K562 (cell line): ENCODE measurements at regions of chr19 and their contacts with region 1.

Region 1: GRCh38 chr19:6862673-6863078 is 24.7 kb upstream of the ADGRE1 start:
- DNase-seq: peak; percentile 76 to 89 (median 78)
- ATAC-seq: peak; percentile 98
- H3K4me3 ChIP-seq: no peak overlapping the region
- H3K27ac ChIP-seq: no peak overlapping the region
- H3K4me1 ChIP-seq: peaks cover 0 to 17% of the 10 kb centered on the region in 2 experiments; a peak in 3 of 5 replicates
- H3K27me3 ChIP-seq: no peaks in the 10 kb centered on the region; a peak in 1 of 5 replicates
- CTCF ChIP-seq: peak; percentile 93 to 96 (median 96)
- EP300 ChIP-seq: peak; percentile 27; the same call in 1 of the 2 replicates
- POLR2A ChIP-seq: no peak
- RAD21 ChIP-seq: peak; percentile 88 to 95

Region 2: GRCh38 chr19:6048808-6049405 is 813.8 kb before region 1 on chr19:
- CTCF ChIA-PET with region 1: interaction called, 12 read pairs
- POLR2A ChIA-PET with region 1: no interaction called
- in situ Hi-C with region 1: no loop called
- intact Hi-C with region 1: loop called (anchors 10 kb)
- DNase-seq: peak; percentile 83 to 89 (median 85)
- ATAC-seq: peak; percentile 100
- H3K4me3 ChIP-seq: no peak overlapping the region
- H3K27ac ChIP-seq: no peak overlapping the region
- H3K4me1 ChIP-seq: peaks cover 4 to 9% of the 10 kb centered on the region in 2 experiments; a peak in 3 of 5 replicates
- H3K27me3 ChIP-seq: no peaks in the 10 kb centered on the region
- CTCF ChIP-seq: peak; percentile 76 to 93 (median 92)
- EP300 ChIP-seq: no peak
- POLR2A ChIP-seq: no peak
- RAD21 ChIP-seq: peak; percentile 84 to 96

Region 3: DNA sequence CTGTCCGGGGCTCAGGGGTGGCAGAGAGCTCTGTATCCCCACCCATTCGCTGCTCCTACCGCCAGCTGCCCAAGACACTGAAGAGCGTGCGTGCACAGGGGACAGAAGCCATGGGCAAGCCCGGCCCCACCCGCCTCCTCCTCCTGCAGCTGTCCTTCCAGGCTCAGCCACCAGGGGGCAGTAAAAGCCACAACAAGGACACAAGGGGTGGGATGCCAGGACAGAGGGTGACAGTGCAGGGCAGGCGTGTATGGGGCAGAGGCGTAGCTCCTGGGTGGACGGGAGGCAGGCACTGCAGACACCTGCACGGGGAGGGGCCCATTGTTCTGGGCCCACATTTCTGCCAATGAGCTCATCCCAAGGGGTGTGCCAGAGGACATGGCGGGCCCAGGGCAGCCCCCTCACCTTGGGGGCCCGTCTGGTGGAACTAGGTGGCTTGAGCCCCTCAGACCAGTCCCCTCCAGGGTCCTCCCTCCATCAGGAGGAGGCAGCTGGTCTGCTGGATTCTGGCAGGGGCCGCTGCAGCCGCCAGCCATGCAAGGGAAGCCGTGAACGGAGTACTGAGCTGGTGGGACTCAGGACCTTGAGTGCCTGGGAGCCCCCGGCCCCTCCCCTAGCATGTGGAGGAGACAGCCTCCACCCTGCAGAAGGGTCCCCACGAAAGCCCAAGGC is 644.0 kb before region 1 on chr19:
- CTCF ChIA-PET with region 1: interaction called, 16 read pairs
- POLR2A ChIA-PET with region 1: no interaction called
- in situ Hi-C with region 1: no loop called
- intact Hi-C with region 1: no loop called
- DNase-seq: peak; percentile 87 to 92 (median 90)
- ATAC-seq: peak; percentile 92
- H3K4me3 ChIP-seq: no peak overlapping the region
- H3K27ac ChIP-seq: no peak overlapping the region; the same call in 2 of the 3 replicates
- H3K4me1 ChIP-seq: peaks cover 15 to 80% of the 10 kb centered on the region in 2 experiments
- H3K27me3 ChIP-seq: no peaks in the 10 kb centered on the region
- CTCF ChIP-seq: peak; percentile 86 to 95 (median 88)
- EP300 ChIP-seq: no peak
- POLR2A ChIP-seq: no peak
- RAD21 ChIP-seq: peak; percentile 75 to 85

Region 4: GRCh38 chr19:6521718-6522646 is 340.7 kb before region 1 on chr19:
- CTCF ChIA-PET with region 1: interaction called, 9 read pairs
- POLR2A ChIA-PET with region 1: no interaction called
- in situ Hi-C with region 1: loop called (anchors 10 kb)
- intact Hi-C with region 1: loop called (anchors 2 kb)
- DNase-seq: peak; percentile 63 to 68 (median 66)
- ATAC-seq: peak; percentile 87
- H3K4me3 ChIP-seq: no peak overlapping the region
- H3K27ac ChIP-seq: peak overlapping the region; percentile 25; the same call in 1 of the 3 replicates
- H3K4me1 ChIP-seq: peaks cover 16 to 17% of the 10 kb centered on the region in 2 experiments
- H3K27me3 ChIP-seq: no peaks in the 10 kb centered on the region
- CTCF ChIP-seq: no peak
- EP300 ChIP-seq: no peak
- POLR2A ChIP-seq: no peak
- RAD21 ChIP-seq: no peak

Region 5: DNA sequence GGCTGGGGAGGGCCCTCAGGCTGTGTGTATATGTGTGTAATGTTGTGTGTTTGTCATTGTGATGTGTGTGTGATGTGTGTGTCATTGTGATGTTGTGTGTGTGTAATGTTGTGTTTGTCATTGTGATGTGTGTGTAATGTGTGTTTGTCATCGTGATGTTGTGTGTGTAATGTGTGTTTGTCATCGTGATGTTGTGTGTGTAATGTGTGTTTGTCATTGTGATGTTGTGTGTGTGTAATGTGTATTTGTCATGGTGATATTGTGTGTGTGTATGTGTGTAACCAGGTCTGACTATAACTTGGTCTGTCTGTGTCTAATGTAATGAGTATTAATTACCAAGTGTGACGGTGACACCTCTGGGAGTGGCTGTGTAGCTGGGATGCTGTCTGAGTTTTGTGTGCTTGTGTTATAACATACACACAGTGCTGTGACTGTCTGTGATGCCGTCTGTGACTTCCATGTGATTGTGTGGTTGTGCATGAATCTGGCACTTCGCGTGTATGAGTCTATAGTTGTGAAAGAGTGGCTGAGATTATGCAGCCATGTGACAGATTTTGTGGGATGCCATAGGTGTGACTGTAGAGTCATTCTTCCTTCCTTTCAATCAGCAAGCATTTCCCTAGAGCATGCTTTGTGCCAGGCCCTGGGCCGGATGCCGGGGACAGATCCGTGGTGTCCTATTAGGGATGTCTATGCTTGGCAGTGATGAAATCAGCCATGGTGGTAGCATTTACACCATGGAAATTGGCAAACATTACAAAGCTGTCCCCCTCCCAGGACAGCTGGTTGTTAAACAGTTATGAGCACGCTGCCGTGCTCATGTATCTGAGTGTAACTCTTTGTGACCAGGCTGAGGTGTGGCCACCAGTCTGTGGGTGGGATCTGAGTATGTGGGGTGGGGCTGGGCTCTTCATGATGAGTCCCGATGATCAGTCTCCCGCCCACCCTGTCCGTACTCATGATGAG is 199.2 kb before region 1 on chr19:
- CTCF ChIA-PET with region 1: no interaction called
- POLR2A ChIA-PET with region 1: no interaction called
- in situ Hi-C with region 1: no loop called
- intact Hi-C with region 1: no loop called
- DNase-seq: no peak
- ATAC-seq: no peak
- H3K4me3 ChIP-seq: no peak overlapping the region
- H3K27ac ChIP-seq: no peak overlapping the region
- H3K4me1 ChIP-seq: peaks cover 8 to 23% of the 10 kb centered on the region in 2 experiments; a peak in 4 of 5 replicates
- H3K27me3 ChIP-seq: peaks cover 0 to 21% of the 10 kb centered on the region in 2 experiments; a peak in 2 of 5 replicates
- CTCF ChIP-seq: no peak
- EP300 ChIP-seq: no peak
- POLR2A ChIP-seq: no peak
- RAD21 ChIP-seq: no peak

Region 6: GRCh38 chr19:6737284-6738046 is 125.2 kb before region 1 on chr19 and contains the start of gene GPR108:
- CTCF ChIA-PET with region 1: interaction called, 16 read pairs
- POLR2A ChIA-PET with region 1: interaction called, 4 read pairs
- in situ Hi-C with region 1: no loop called
- intact Hi-C with region 1: loop called (anchors 1 kb)
- DNase-seq: peak; percentile 92 to 100 (median 96)
- ATAC-seq: peak; percentile 84
- H3K4me3 ChIP-seq: peak within 1 kb of the TSS; percentile 62
- H3K27ac ChIP-seq: peak within 1 kb of the TSS; percentile 91
- H3K4me1 ChIP-seq: peaks cover 46 to 70% of the 10 kb centered on the region in 2 experiments
- H3K27me3 ChIP-seq: no peaks in the 10 kb centered on the region
- CTCF ChIP-seq: peak in 1 of 3 experiments; percentile 5; a peak in 1 of 6 replicates
- EP300 ChIP-seq: no peak; the same call in none of the 2 replicates
- POLR2A ChIP-seq: no peak
- RAD21 ChIP-seq: no peak
- polyA plus RNA-seq, gene GPR108: 2.4 to 6.1 TPM

Region 7: GRCh38 chr19:6947745-6948144 is 85.1 kb after region 1 on chr19:
- CTCF ChIA-PET with region 1: no interaction called
- POLR2A ChIA-PET with region 1: no interaction called
- in situ Hi-C with region 1: no loop called
- intact Hi-C with region 1: no loop called
- DNase-seq: no peak
- ATAC-seq: no peak
- H3K4me3 ChIP-seq: no peak overlapping the region
- H3K27ac ChIP-seq: no peak overlapping the region
- H3K4me1 ChIP-seq: no peaks in the 10 kb centered on the region
- H3K27me3 ChIP-seq: peaks cover 0 to 7% of the 10 kb centered on the region in 2 experiments; a peak in 1 of 5 replicates
- CTCF ChIP-seq: no peak
- EP300 ChIP-seq: no peak
- POLR2A ChIP-seq: no peak
- RAD21 ChIP-seq: no peak